Activated CD4-positive, alpha-beta T cell treated with anti-CD3 and anti-CD28 coated beads, Interleukin-2, amount 10 ng/mL, durations not matched to agents 7 days and 5 days (primary cell): ENCODE measurements at regions of chr7 and their contacts with region 1.

Region 1: GRCh38 chr7:101138213-101138870 is 11.4 kb downstream of the SERPINE1 start:
- DNase-seq: peak; percentile 81
- H3K4me3 Mint-ChIP-seq: peak overlapping the region; percentile 22
- H3K27ac Mint-ChIP-seq: peak overlapping the region; percentile 64
- H3K4me1 Mint-ChIP-seq: peaks cover 35% of the 10 kb centered on the region
- H3K27me3 Mint-ChIP-seq: peaks cover 29% of the 10 kb centered on the region

Region 2: DNA sequence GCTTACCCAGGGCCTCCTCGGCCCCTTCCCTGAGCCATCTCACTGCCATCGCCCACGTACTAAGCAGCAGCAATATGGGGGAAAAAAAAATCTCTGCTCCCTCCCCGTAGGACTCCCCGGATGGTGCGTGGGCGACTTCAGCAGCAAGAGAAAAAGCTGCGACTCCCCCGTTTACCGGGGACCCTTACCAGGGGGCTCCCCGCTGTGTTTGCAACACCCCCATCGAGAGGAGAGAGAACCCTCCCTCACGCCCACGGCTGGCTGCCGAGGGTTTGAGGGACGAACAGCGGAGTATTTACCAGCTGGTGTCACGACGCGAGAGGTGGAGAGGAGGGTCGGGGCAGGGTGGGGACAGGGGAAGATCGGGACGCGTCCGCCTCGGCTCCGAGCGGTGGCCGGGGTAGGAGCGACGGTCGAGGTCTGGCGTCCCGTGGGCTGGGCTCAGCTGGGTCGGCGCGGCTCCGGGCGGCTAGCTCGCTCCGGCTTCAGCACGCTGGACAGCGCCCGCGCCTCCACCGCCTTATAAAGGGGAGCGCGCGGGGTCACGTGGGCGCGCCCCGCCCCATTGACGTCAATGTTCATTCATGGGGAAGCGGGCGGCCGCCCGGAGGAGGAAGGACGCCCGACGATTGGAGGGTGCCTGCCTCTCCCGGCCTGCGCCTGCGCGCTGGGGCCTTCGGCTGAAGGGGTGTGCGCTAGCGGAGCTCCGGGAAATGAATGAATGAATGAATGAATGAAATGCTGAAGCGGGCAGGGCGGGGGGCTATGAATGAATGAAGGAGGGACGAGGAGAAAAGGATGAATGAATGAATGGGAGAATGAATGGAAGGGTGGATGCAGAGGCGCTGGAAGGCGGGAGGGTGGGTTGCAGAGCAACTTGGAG is 27.0 kb after region 1 on chr7 and contains the start of gene VGF:
- CTCF ChIA-PET with region 1: interaction called, 23 read pairs
- POLR2A ChIA-PET with region 1: no interaction called
- DNase-seq: peak; percentile 94
- H3K4me3 Mint-ChIP-seq: peak within 1 kb of the TSS; percentile 60
- H3K27ac Mint-ChIP-seq: peak within 1 kb of the TSS; percentile 52
- H3K4me1 Mint-ChIP-seq: peaks cover 42% of the 10 kb centered on the region
- H3K27me3 Mint-ChIP-seq: peaks cover 63% of the 10 kb centered on the region
- total RNA-seq, gene VGF: 0.15 to 0.22 TPM

Region 3: DNA sequence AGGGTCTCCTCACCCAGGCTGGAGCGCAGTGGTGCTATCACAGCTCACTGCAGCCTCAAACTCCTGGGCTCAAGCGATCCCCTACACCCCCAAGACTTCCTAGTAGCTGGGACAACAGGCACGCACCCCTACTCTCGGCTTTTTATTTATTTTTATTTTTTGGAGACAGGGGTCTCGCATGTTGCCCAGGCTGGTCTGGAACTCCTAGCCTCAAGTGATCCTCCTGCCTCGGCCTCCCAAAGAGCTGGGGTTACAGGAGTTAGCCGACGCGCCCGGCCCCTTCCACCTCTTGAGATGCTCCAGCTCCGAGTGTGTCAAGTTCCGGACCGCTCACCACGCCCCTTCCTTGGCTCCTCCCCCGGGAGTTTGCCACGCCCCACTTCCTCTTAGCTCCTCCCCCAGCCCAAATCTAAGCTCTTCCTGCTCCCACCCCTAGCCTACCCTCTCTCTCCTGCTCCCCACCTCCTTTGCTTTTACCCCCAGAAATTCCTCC is 35.5 kb after region 1 on chr7:
- CTCF ChIA-PET with region 1: interaction called, 23 read pairs
- POLR2A ChIA-PET with region 1: no interaction called
- DNase-seq: peak; percentile 69
- H3K4me3 Mint-ChIP-seq: peak overlapping the region; percentile 59
- H3K27ac Mint-ChIP-seq: peak overlapping the region; percentile 9
- H3K4me1 Mint-ChIP-seq: peaks cover 41% of the 10 kb centered on the region
- H3K27me3 Mint-ChIP-seq: peaks cover 89% of the 10 kb centered on the region

Region 4: GRCh38 chr7:101186844-101187428 is 48.6 kb after region 1 on chr7:
- CTCF ChIA-PET with region 1: interaction called, 29 read pairs
- POLR2A ChIA-PET with region 1: no interaction called
- DNase-seq: no peak
- H3K4me3 Mint-ChIP-seq: no peak overlapping the region
- H3K27ac Mint-ChIP-seq: no peak overlapping the region
- H3K4me1 Mint-ChIP-seq: peaks cover 5% of the 10 kb centered on the region
- H3K27me3 Mint-ChIP-seq: peaks cover 18% of the 10 kb centered on the region

Region 5: GRCh38 chr7:101244375-101245146 is 106.2 kb after region 1 on chr7 and contains the start of gene FIS1:
- CTCF ChIA-PET with region 1: interaction called, 20 read pairs
- POLR2A ChIA-PET with region 1: no interaction called
- DNase-seq: peak; percentile 94
- H3K4me3 Mint-ChIP-seq: peak within 1 kb of the TSS; percentile 88
- H3K27ac Mint-ChIP-seq: peak within 1 kb of the TSS; percentile 97
- H3K4me1 Mint-ChIP-seq: peaks cover 40% of the 10 kb centered on the region
- H3K27me3 Mint-ChIP-seq: no peaks in the 10 kb centered on the region
- total RNA-seq, gene FIS1: 87.3 to 103 TPM

Region 6: GRCh38 chr7:101287032-101287431 is 148.7 kb after region 1 on chr7:
- CTCF ChIA-PET with region 1: interaction called, 16 read pairs
- POLR2A ChIA-PET with region 1: no interaction called
- DNase-seq: no peak
- H3K4me3 Mint-ChIP-seq: no peak overlapping the region
- H3K27ac Mint-ChIP-seq: no peak overlapping the region
- H3K4me1 Mint-ChIP-seq: peaks cover 16% of the 10 kb centered on the region
- H3K27me3 Mint-ChIP-seq: peaks cover 15% of the 10 kb centered on the region